Activated CD4-positive, alpha-beta T cell treated with anti-CD3 and anti-CD28 coated beads for 36 hours (primary cell): ENCODE measurements at regions of chr5 and their contacts with region 1.

Region 1: DNA sequence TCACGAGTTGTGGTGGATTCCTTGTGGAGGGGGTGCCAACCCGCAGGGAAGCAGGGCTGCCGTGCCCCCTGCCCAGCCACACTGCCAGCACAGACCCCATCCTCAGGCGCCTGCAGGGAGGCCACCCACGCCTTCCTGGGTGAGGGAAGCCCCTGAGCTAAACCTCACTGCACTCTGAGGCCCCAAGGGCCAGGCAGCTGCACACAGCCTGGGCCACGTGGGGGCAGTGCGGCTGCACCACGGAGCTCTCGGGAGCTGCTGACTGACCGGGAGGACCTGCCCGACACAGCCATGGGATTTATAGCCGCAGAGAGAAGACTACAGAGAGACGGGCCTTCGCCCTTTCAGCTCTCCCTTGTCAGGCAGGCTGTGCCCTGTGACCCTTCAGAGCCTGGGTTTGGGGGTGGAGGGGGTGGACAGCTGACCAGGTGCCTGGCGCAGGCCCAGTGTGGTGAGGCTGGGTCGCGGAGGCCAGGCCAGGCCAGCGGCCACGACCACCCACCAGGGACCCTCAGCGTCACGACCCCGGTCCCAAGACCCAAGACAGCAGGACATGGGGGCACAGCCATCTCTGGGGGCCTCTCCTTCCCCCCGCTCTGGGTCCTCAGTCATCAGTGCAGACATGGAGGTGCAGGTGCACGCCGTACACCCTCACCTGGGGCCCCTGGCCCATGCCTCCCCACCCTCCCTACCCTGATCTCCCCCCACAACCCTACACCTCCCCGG is 4.3 kb upstream of the AHRR start:
- DNase-seq: peak; percentile 79
- ATAC-seq: peak; percentile 74
- H3K4me3 Mint-ChIP-seq: no peak overlapping the region
- H3K27ac Mint-ChIP-seq: no peak overlapping the region
- H3K4me1 Mint-ChIP-seq: peaks cover 11% of the 10 kb centered on the region
- H3K27me3 Mint-ChIP-seq: peaks cover 11% of the 10 kb centered on the region

Region 2: DNA sequence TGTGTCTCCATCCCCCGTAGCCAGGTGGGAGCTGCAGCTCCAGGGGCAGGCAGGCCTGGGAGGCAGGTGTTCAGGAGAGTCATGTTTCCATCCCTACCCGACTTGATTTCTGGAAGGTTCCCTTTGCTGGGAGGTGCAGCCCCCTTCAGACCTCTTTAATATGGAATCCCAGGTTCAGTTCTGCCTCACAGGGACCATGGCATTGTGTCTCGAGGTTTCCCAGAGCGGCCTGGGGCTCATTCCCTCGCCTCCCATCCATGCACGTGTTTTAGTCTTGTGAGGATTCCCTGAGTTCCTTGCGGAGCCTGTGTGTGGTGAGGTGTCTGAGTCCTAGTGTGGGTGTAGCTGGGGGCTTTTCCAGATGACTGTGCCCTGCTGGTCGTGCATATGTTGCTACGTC is 12.2 kb before region 1 on chr5:
- CTCF ChIA-PET with region 1: no interaction called
- POLR2A ChIA-PET with region 1: no interaction called
- intact Hi-C with region 1: no loop called
- DNase-seq: no peak
- ATAC-seq: no peak
- H3K4me3 Mint-ChIP-seq: no peak overlapping the region
- H3K27ac Mint-ChIP-seq: no peak overlapping the region
- H3K4me1 Mint-ChIP-seq: peaks cover 18% of the 10 kb centered on the region
- H3K27me3 Mint-ChIP-seq: no peaks in the 10 kb centered on the region

Region 3: DNA sequence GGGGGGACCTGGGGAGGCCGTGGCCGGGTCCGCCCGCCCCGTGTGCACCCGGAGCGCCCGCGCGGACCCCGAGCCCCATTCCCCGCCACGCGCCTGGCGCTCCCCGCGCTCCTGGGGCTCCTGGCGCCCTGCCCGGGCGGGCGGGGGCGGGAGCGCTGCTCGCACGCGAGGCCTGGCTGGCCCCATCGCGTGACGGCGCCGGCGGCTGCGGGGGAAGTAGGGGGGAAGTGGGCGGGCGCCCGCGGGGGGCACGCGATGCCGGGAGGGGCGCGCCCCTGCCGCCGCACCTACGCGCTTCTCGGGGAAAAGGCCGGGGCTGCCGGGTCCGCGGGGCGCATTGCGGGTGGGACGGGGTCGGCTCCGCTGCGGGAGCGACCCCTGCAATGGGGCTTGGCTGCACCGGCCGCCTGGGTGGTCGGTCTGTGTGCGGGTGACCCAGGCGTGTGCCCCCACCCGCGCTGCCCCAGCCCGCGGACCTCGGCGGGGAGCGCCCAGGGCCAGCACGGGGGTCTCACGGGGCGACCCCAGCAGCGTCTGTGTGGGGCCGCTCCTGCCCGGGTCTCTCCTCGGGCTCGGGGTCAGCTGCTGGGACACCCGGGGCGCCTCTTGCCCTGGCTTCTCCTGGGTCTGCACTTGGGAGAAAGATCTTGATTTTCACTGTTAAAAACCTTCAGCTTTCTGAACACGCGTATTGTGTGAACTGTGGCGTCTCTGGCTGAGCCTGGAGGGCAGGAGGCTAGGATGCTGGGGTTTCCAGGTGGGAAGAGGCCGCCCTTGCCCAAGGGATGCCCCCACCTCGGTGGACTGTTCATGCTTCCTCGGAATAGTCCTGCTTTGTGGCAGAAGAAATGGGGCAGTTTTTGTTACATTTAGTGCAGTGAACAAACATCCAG is 56.7 kb after region 1 on chr5:
- CTCF ChIA-PET with region 1: interaction called, 4 read pairs
- POLR2A ChIA-PET with region 1: no interaction called
- intact Hi-C with region 1: loop called in 1 of 2 experiments (anchors 2 kb)
- DNase-seq: peak; percentile 88
- ATAC-seq: peak; percentile 37
- H3K4me3 Mint-ChIP-seq: peak overlapping the region; percentile 62
- H3K27ac Mint-ChIP-seq: peak overlapping the region; percentile 94
- H3K4me1 Mint-ChIP-seq: peaks cover 69% of the 10 kb centered on the region
- H3K27me3 Mint-ChIP-seq: no peaks in the 10 kb centered on the region

Region 4: GRCh38 chr5:424301-425110 is 107.3 kb after region 1 on chr5:
- CTCF ChIA-PET with region 1: interaction called, 4 read pairs
- POLR2A ChIA-PET with region 1: no interaction called
- intact Hi-C with region 1: loop called in 1 of 2 experiments (anchors 1 kb)
- DNase-seq: no peak
- ATAC-seq: no peak
- H3K4me3 Mint-ChIP-seq: no peak overlapping the region
- H3K27ac Mint-ChIP-seq: no peak overlapping the region
- H3K4me1 Mint-ChIP-seq: no peaks in the 10 kb centered on the region
- H3K27me3 Mint-ChIP-seq: peaks cover 6% of the 10 kb centered on the region

Region 5: DNA sequence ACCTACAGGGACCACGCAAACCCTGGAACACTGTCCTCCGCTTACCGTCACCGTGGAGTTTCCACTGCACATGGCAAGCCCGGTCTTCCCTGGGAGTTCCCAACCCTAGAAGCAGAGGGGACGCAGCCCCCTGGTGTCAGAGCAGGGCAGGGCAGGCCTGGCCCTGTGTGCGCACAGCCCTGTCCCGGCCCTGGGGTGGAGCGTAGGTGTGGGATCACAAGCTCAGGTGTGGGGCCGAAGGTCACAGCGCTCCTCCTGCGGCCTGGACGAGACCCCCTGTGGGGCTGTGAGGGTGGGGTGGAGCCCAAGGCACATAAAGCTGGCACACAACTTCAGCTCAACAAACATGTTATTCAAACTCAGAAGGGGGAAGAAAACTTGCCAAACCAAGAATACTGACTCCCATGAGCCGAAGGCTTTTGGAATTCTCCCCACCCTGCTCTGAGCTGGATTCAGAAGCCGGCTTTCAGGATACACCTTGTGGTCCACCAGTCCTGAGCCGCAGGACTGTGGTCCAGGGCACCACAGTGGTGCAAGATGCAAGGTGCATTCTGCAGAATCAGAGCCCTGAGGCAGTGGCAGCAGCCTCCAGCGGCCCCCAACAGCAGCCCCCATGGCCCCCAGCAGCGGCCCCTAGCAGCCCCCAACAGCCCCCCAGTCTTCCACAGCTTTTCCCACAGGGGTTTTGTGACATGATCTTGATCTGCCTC is 113.9 kb after region 1 on chr5:
- CTCF ChIA-PET with region 1: interaction called, 10 read pairs
- POLR2A ChIA-PET with region 1: no interaction called
- intact Hi-C with region 1: loop called (anchors 1 to 5 kb)
- DNase-seq: peak; percentile 73
- ATAC-seq: peak; percentile 90
- H3K4me3 Mint-ChIP-seq: no peak overlapping the region
- H3K27ac Mint-ChIP-seq: no peak overlapping the region
- H3K4me1 Mint-ChIP-seq: no peaks in the 10 kb centered on the region
- H3K27me3 Mint-ChIP-seq: peaks cover 4% of the 10 kb centered on the region